Activated CD4-positive, alpha-beta T cell treated with anti-CD3 and anti-CD28 coated beads, Interleukin-2, amount 10 ng/mL, durations not matched to agents 24 days and 14 days (primary cell): ENCODE measurements at regions of chr1 and their contacts with region 1.

Region 1: DNA sequence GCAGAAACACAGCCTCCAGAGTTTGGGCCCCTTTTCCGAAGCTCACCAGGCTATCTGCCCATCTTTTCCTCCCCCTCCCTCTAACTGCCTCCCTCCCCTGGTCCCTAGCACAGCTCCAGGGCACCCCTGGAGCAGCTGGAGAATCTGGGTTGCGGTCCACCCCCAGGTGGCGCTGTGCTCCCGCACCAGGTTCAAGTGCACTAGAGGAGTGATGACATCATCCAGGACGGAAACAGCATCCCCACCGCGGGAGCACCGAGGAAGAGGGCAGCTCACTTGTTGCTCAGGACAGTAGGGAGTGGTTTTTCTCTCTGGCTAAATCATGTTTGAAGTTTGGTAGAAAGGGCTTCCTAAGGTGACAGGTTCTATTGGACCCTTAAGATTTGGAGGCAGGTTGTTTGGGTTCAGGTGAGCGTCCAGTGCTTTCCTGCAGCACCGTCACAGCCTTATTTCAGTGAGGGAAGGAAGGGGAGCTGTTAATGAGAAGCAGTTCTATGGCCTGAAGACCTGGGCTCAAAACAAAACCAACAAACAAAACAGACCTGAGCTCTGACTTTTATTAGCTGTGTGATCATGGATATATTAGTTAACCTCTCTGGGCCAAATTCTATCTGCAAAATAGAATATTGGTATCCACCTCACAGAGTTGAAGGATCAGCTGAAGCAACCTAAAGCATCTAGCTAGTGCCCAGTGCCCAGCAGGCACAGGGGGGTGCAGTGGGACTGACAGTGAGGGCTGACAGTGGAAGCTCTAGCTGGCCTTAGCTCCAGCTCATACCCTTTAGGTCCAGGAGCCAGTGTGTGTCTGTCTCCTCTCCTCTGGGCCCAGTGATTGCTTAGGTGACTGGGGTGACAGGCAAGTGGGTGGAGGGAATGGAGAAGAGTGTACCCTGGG is 7.5 kb downstream of the SHISA4 start:
- DNase-seq: peak; percentile 96
- H3K4me3 Mint-ChIP-seq: peak overlapping the region; percentile 60
- H3K27ac Mint-ChIP-seq: peak overlapping the region; percentile 78
- H3K4me1 Mint-ChIP-seq: peaks cover 9% of the 10 kb centered on the region
- H3K27me3 Mint-ChIP-seq: peaks cover 11% of the 10 kb centered on the region

Region 2: GRCh38 chr1:201955009-201955728 is 59.0 kb after region 1 on chr1 and contains the start of gene TIMM17A:
- intact Hi-C with region 1: loop called (anchors 5 kb)
- DNase-seq: peak; percentile 99
- H3K4me3 Mint-ChIP-seq: peak within 1 kb of the TSS; percentile 100
- H3K27ac Mint-ChIP-seq: peak within 1 kb of the TSS; percentile 93
- H3K4me1 Mint-ChIP-seq: peaks cover 16% of the 10 kb centered on the region
- H3K27me3 Mint-ChIP-seq: peaks cover 2% of the 10 kb centered on the region
- total RNA-seq, gene TIMM17A: 119 and 122 TPM in 2 replicates

Region 3: DNA sequence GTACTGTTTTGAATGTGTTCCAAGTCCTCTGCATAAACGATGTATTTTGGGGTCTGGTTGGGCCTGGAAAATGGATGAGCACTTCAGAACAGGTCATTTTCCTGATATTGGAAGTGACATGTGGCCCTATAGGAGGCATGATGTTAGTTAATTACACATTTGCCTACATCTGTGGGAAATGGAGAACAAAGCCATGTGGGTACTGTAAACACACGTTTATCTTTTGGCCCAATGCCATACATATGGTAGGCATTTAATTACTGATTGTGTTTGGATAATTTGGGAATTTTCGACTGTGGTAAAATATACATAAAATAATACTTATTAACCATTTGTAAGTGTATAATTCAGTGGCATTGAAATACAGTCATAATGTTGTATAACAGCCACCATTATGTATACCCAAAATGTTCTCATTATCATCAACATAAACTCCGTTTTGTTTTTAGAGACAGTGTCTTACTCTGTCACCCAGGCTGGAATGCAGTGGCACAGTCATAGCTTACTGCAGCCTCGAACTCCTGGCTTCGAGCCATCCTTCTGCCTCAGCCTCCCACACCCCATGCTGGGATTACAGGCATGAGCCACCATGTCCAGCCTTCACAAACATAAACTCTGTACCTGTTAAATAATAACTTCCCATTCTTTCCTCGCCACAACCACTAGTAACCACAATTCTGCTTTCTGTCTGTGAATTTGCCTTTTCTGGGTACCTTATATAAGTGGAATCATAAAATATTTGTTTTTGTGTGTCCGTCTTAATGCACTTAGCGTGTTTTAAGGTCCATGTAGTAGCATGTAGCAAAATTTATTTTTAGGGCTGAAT is 74.4 kb after region 1 on chr1:
- intact Hi-C with region 1: loop called (anchors 1 kb)
- DNase-seq: no peak
- H3K4me3 Mint-ChIP-seq: no peak overlapping the region
- H3K27ac Mint-ChIP-seq: no peak overlapping the region
- H3K4me1 Mint-ChIP-seq: peaks cover 3% of the 10 kb centered on the region
- H3K27me3 Mint-ChIP-seq: peaks cover 12% of the 10 kb centered on the region

Region 4: GRCh38 chr1:202117865-202118371 is 221.8 kb after region 1 on chr1:
- intact Hi-C with region 1: loop called (anchors 5 kb)
- DNase-seq: no peak
- H3K4me3 Mint-ChIP-seq: no peak overlapping the region
- H3K27ac Mint-ChIP-seq: no peak overlapping the region
- H3K4me1 Mint-ChIP-seq: no peaks in the 10 kb centered on the region
- H3K27me3 Mint-ChIP-seq: peaks cover 7% of the 10 kb centered on the region

Region 5: DNA sequence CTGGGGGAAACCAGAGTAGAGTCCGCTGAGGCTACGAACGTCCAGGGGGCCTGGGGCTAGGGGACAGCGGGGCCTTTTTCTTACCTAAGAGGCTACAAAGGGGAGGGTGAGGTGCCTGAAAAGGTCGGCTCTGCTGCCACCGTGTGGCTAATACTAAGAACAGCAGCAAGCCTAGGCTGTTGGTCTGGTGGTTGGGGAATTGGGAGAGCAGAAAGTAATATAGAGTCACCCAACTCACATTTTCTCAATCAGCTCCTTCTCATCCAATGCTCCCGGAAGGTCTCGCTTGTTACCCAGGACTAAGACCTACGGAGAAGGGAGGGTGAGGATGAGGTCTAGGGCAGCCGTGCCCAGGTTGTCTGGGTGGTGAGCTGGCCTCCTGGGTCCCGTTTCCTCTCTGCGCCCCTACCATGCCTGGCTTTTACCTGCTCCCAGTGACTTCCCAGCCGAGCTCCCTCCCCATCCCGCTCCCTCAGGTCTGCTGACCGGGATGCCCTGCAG is 239.1 kb after region 1 on chr1:
- intact Hi-C with region 1: loop called (anchors 5 kb)
- DNase-seq: peak; percentile 87
- H3K4me3 Mint-ChIP-seq: no peak overlapping the region
- H3K27ac Mint-ChIP-seq: no peak overlapping the region
- H3K4me1 Mint-ChIP-seq: peaks cover 5% of the 10 kb centered on the region
- H3K27me3 Mint-ChIP-seq: no peaks in the 10 kb centered on the region